ENCODE measurements at regions of chr19 and their contacts with region 1.

Region 1: GRCh38 chr19:43723588-43723987 is 7.7 kb downstream of the IRGC start:
- DNase-seq: no peak
- H3K4me3 ChIP-seq: no peak overlapping the region
- H3K27ac ChIP-seq: no peak overlapping the region
- H3K4me1 ChIP-seq: no peaks in the 10 kb centered on the region
- H3K27me3 ChIP-seq: no peaks in the 10 kb centered on the region
- CTCF ChIP-seq: peak; percentile 26 to 38

Region 2: DNA sequence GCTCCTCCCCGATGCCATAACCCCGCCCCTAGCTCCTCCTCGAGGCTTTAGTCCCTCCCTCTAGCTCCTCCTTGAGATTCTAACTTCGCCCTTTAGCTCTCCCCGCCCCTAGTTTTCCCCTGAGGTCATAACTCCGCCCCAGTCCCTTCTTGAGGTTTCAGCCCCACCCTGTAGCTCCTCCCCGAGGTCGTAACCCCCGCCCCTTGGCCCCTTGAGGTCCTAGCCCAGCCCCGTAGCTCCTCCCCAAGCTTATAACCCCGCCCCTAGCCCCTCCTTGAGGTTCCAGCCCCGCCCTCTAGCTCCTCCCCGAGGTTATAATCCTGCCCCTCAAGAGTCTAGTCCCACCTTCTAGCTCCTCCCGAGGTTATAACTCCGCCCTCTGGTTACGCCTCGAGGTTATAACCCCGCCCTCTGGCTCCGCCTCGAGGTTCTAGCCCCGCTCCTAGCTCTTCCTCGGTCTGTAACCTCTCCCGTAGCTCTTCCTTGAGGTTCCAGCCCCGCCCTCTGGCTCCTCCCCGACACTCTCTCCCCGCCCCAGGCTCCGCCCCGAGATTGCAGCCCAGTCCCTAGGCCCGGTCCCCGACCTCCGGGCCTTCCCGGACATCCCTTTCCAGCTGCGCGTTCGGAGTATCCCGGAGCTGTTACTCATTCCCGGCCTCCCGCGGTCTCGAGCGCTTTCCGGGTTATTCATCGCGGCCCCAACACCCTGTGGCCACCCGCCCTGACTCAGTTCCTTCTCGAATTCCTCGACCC is 55.0 kb before region 1 on chr19:
- CTCF ChIA-PET with region 1: interaction called, 4 read pairs
- dilution Hi-C with region 1: no loop called
- in situ Hi-C with region 1: no loop called
- intact Hi-C with region 1: loop called (anchors 1 kb)
- DNase-seq: peak; percentile 99
- H3K4me3 ChIP-seq: peak overlapping the region; percentile 69 to 77 (median 70)
- H3K27ac ChIP-seq: peak overlapping the region; percentile 96
- H3K4me1 ChIP-seq: peaks cover 13% of the 10 kb centered on the region
- H3K27me3 ChIP-seq: no peaks in the 10 kb centered on the region
- CTCF ChIP-seq: no peak

Region 3: GRCh38 chr19:43687660-43687997 is 36.0 kb before region 1 on chr19:
- CTCF ChIA-PET with region 1: no interaction called
- dilution Hi-C with region 1: no loop called
- in situ Hi-C with region 1: no loop called
- intact Hi-C with region 1: no loop called
- DNase-seq: no peak
- H3K4me3 ChIP-seq: no peak overlapping the region
- H3K27ac ChIP-seq: no peak overlapping the region
- H3K4me1 ChIP-seq: peaks cover 16% of the 10 kb centered on the region
- H3K27me3 ChIP-seq: no peaks in the 10 kb centered on the region
- CTCF ChIP-seq: no peak

Region 4: DNA sequence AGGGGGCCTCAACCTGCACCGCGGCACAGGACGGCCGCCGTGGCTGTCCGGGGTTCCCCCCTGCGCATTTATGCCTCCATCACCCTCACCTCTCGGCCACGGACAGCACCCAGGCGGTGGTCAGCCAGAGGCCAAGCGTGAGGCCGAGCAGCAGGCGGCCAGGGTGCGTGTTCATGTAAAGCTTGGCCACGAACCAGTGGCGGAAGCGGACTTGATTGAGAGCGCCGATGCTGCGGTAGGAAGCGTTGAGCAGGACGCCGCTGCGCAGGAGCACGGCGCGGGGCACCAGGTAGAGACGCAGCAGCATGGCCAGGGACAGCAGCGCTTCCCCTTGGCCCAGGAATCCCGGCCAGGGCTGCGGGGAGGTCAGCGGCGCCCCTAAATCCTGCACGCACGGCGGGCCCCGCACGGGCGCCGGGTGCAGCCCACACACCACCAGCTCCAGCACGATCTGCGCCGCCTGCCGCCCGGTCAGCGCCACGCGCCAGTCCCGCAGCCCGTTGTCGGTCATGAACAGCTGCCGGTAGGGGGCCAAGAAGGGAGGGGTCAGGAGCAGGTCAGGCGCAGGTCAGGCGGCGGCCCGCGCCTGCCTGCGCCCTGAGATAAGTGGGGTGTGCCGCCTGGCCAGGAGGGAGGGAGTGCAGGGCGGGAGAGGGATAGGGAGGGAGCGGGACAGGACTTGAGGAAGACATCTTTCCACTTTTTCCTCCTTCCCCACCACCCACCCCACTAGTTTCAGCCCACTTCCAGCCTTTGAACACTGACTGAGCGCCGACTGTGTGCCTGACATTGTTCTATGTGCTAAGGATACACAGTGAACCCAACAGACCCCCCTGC is 50.7 kb after region 1 on chr19:
- CTCF ChIA-PET with region 1: no interaction called
- dilution Hi-C with region 1: loop called (anchors 5 kb)
- in situ Hi-C with region 1: no loop called
- intact Hi-C with region 1: no loop called
- DNase-seq: no peak
- H3K4me3 ChIP-seq: no peak overlapping the region
- H3K27ac ChIP-seq: no peak overlapping the region
- H3K4me1 ChIP-seq: peaks cover 42% of the 10 kb centered on the region
- H3K27me3 ChIP-seq: no peaks in the 10 kb centered on the region
- CTCF ChIP-seq: no peak

Measured in mammary epithelial cell (primary cell).